ENCODE measurements at regions of chr16 and their contacts with region 1.

Region 1: DNA sequence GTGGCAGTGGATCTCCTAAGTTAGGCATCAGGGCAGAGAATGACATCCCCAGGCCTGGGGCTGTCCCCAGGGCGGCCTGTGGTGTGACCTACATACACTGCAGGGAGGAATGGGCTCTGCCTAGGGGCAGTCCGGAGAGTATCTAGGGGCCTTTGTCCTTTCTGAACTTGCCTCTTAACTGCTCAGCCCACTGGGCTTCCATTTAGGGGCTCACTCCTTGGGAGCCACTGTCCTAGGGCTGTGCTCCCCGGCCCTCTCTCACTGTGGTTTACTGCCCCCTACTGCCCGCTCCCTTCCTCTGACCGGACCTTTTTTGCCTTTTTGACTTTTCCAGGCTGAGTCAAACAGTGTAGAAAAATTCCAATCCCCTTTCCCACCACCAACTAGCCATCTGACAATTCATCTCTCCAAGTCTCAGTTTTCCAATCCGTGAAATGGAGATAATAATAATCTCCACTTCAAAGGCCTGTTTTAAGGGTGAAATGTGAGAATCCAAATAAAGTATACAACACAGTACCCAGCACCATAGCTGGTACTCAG is 66.8 kb downstream of the DNAH3 start:
- DNase-seq: peak; percentile 18
- ATAC-seq: peak; percentile 47
- H3K4me3 Mint-ChIP-seq: no peak overlapping the region
- H3K27ac Mint-ChIP-seq: no peak overlapping the region
- H3K4me1 Mint-ChIP-seq: no peaks in the 10 kb centered on the region
- H3K27me3 Mint-ChIP-seq: peaks cover 4% of the 10 kb centered on the region
- CTCF ChIP-seq: no peak

Region 2: DNA sequence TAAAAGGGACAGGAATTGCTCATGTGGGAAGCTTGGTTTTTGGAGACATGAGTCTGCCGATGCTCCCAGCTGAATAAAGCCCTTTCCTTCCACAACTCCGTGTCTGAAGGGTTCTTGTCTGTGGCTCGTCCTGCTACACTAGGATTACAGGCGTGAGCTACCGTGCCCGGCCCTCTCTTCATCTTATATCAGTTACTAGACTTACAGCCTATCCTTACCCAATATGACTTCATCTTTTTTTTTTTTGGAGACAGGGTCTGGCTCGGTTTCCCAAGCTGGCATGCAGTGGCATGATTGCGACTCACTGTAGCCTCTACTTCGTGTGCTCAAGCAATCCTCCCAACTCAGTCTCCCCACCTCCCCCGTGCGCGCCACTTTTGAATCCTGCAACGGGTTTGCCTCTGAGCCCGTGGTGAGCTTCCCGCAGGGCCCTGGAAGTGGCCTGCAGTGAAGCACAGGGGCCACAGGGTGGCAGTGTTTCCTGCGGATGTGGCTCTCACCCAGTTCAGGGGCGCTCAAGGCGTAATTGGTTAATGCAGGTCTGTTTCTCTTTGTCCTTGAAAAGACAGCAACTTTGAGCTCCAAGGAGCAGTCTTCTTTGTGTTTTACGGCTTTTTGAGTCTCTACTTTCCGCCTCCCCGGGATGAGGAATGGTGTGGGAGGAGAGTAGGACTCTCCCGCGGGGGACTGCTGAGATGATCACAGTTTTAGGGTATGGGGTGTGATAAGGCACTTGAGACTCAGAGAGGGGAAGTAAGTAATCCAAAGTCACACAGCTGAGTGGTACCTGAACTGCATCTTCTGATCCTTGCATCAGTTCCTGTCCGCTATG is 1176.4 kb before region 1 on chr16:
- CTCF ChIA-PET with region 1: no interaction called
- POLR2A ChIA-PET with region 1: no interaction called
- intact Hi-C with region 1: loop called (anchors 5 kb)
- DNase-seq: peak; percentile 29
- ATAC-seq: peak; percentile 86
- H3K4me3 Mint-ChIP-seq: no peak overlapping the region
- H3K27ac Mint-ChIP-seq: no peak overlapping the region
- H3K4me1 Mint-ChIP-seq: peaks cover 9% of the 10 kb centered on the region
- H3K27me3 Mint-ChIP-seq: peaks cover 21% of the 10 kb centered on the region
- CTCF ChIP-seq: no peak

Region 3: GRCh38 chr16:20774703-20775362 is 309.0 kb before region 1 on chr16:
- CTCF ChIA-PET with region 1: no interaction called
- POLR2A ChIA-PET with region 1: no interaction called
- intact Hi-C with region 1: loop called (anchors 10 kb)
- DNase-seq: peak; percentile 18
- ATAC-seq: peak; percentile 67
- H3K4me3 Mint-ChIP-seq: no peak overlapping the region
- H3K27ac Mint-ChIP-seq: no peak overlapping the region
- H3K4me1 Mint-ChIP-seq: no peaks in the 10 kb centered on the region
- H3K27me3 Mint-ChIP-seq: no peaks in the 10 kb centered on the region
- CTCF ChIP-seq: no peak